MCF 10A (cell line): ENCODE measurements at regions of chr5 and their contacts with region 1.

Region 1: DNA sequence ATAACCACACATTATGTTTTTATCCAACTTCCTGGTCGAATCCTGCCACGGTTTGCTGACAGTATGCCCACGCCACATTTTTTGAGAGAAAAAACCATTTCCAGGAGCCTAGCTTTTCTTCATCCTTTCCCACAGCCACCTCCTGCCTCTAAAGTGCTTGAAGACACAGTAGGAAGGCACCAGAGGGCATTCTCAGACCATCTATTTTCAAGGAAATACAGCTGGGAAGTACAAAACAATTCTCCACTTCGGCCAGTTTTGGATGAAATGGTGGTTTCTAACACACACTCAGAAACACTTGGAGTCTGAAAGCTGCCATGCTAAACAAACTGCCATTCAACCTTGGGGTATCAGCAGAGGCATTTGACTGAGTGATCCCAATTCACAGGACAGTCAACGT is 86.3 kb upstream of the RPS23 start:
- DNase-seq: peak; percentile 73
- H3K4me3 Mint-ChIP-seq: no peak overlapping the region
- H3K27ac Mint-ChIP-seq: no peak overlapping the region
- H3K4me1 Mint-ChIP-seq: peaks cover 31% of the 10 kb centered on the region
- H3K27me3 Mint-ChIP-seq: no peaks in the 10 kb centered on the region
- CTCF ChIP-seq: peak; percentile 54

Region 2: GRCh38 chr5:82421119-82421518 is 56.6 kb after region 1 on chr5:
- CTCF ChIA-PET with region 1: interaction called, 10 read pairs
- POLR2A ChIA-PET with region 1: interaction called, 5 read pairs
- intact Hi-C with region 1: loop called (anchors 1 kb)
- DNase-seq: peak; percentile 99
- H3K4me3 Mint-ChIP-seq: no peak overlapping the region
- H3K27ac Mint-ChIP-seq: no peak overlapping the region
- H3K4me1 Mint-ChIP-seq: peaks cover 51% of the 10 kb centered on the region
- H3K27me3 Mint-ChIP-seq: no peaks in the 10 kb centered on the region
- CTCF ChIP-seq: peak; percentile 49

Region 3: DNA sequence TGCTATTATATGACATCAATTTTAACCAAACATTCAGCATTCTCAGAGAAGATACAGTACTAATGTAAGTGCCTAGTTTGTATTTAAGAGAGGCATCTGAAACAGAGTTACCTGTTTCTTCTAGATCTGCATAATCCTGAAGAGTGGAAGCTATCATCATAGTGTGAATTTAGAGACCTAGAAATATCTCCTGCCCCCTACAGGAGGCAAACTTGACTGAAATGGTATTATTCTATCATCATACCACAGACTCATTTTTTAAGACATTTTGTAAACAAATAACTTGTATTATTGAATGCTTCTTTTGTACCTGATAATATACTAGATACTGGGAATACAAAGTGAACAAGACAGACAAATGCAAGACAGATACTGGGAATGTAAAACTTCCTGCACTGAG is 130.4 kb after region 1 on chr5:
- CTCF ChIA-PET with region 1: interaction called, 4 read pairs
- POLR2A ChIA-PET with region 1: no interaction called
- intact Hi-C with region 1: loop called (anchors 1 kb)
- DNase-seq: peak; percentile 23
- H3K4me3 Mint-ChIP-seq: no peak overlapping the region
- H3K27ac Mint-ChIP-seq: no peak overlapping the region
- H3K4me1 Mint-ChIP-seq: no peaks in the 10 kb centered on the region
- H3K27me3 Mint-ChIP-seq: no peaks in the 10 kb centered on the region
- CTCF ChIP-seq: peak; percentile 21

Region 4: GRCh38 chr5:82635561-82636288 is 271.2 kb after region 1 on chr5:
- CTCF ChIA-PET with region 1: no interaction called
- POLR2A ChIA-PET with region 1: no interaction called
- intact Hi-C with region 1: loop called (anchors 1 kb)
- DNase-seq: peak; percentile 8
- H3K4me3 Mint-ChIP-seq: no peak overlapping the region
- H3K27ac Mint-ChIP-seq: no peak overlapping the region
- H3K4me1 Mint-ChIP-seq: peaks cover 6% of the 10 kb centered on the region
- H3K27me3 Mint-ChIP-seq: no peaks in the 10 kb centered on the region
- CTCF ChIP-seq: no peak